ENCODE measurements at regions of chr22 and their contacts with region 1.

Region 1: GRCh38 chr22:20013382-20013871 is 3.2 kb downstream of the ARVCF start:
- DNase-seq: peak; percentile 72
- ATAC-seq: peak; percentile 25
- H3K4me3 Mint-ChIP-seq: no peak overlapping the region
- H3K27ac Mint-ChIP-seq: no peak overlapping the region
- H3K4me1 Mint-ChIP-seq: peaks cover 3% of the 10 kb centered on the region
- H3K27me3 Mint-ChIP-seq: peaks cover 18% of the 10 kb centered on the region
- CTCF ChIP-seq: peak; percentile 72

Region 2: DNA sequence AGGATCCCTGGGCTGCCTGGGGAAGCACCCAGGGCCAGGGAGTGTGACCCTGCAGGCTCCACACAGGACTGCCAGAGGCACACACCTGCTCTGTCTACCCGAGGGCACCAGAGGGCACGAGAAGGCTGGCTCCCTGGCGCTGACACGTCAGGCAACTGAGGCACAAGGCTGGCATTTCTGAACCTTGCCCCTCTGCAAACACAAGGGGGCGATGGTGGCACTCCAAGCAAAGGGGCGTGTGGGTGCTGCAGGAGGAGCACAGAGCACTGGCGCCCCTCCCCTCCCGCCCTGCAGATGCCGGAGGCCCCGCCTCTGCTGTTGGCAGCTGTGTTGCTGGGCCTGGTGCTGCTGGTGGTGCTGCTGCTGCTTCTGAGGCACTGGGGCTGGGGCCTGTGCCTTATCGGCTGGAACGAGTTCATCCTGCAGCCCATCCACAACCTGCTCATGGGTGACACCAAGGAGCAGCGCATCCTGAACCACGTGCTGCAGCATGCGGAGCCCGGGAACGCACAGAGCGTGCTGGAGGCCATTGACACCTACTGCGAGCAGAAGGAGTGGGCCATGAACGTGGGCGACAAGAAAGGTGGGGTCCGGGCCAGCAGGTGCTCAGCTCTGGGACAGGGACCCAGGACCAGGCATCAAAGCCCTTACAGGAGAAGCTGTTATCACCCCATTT is 51.1 kb before region 1 on chr22:
- CTCF ChIA-PET with region 1: interaction called, 12 read pairs
- POLR2A ChIA-PET with region 1: no interaction called
- intact Hi-C with region 1: no loop called
- DNase-seq: peak; percentile 85
- ATAC-seq: peak; percentile 93
- H3K4me3 Mint-ChIP-seq: no peak overlapping the region
- H3K27ac Mint-ChIP-seq: no peak overlapping the region
- H3K4me1 Mint-ChIP-seq: peaks cover 3% of the 10 kb centered on the region
- H3K27me3 Mint-ChIP-seq: no peaks in the 10 kb centered on the region
- CTCF ChIP-seq: peak; percentile 79

Region 3: DNA sequence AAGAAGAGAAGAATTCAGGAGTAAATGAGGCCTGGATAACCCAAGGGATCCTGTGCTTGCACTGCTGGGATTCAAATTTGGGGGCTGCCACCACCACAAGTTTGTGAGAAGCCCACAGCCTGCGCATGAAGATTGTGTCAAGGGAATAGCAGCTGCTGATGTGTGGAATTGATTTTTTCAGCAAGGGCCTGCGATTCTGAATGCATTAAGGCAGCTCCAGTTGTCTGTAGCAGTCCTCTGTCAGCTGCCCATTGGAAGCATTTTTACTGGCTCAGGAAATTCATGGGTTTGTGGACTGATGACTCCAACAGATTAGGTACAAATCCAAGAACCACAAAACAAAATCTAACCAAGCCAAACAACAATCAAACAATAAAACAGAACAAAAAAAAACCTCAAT is 10.8 kb before region 1 on chr22:
- CTCF ChIA-PET with region 1: interaction called, 11 read pairs
- POLR2A ChIA-PET with region 1: no interaction called
- intact Hi-C with region 1: no loop called
- DNase-seq: no peak
- ATAC-seq: no peak
- H3K4me3 Mint-ChIP-seq: no peak overlapping the region
- H3K27ac Mint-ChIP-seq: no peak overlapping the region
- H3K4me1 Mint-ChIP-seq: no peaks in the 10 kb centered on the region
- H3K27me3 Mint-ChIP-seq: no peaks in the 10 kb centered on the region
- CTCF ChIP-seq: no peak

Region 4: GRCh38 chr22:20118572-20119020 is 105.2 kb after region 1 on chr22:
- CTCF ChIA-PET with region 1: no interaction called
- POLR2A ChIA-PET with region 1: no interaction called
- intact Hi-C with region 1: no loop called
- DNase-seq: peak; percentile 35
- ATAC-seq: no peak
- H3K4me3 Mint-ChIP-seq: peak overlapping the region; percentile 97
- H3K27ac Mint-ChIP-seq: peak overlapping the region; percentile 95
- H3K4me1 Mint-ChIP-seq: peaks cover 55% of the 10 kb centered on the region
- H3K27me3 Mint-ChIP-seq: no peaks in the 10 kb centered on the region
- CTCF ChIP-seq: no peak